Activated B cell treated with CpG ODN at 0.5 μM for 24 hours (primary cell): ENCODE measurements at regions of chr3 and their contacts with region 1.

Region 1: GRCh38 chr3:112642912-112643506 is 2.1 kb upstream of the CCDC80 start:
- DNase-seq: peak; percentile 51
- ATAC-seq: peak; percentile 100
- H3K4me3 Mint-ChIP-seq: peak overlapping the region; percentile 69
- H3K27ac Mint-ChIP-seq: no peak overlapping the region
- H3K4me1 Mint-ChIP-seq: peaks cover 11% of the 10 kb centered on the region
- H3K27me3 Mint-ChIP-seq: peaks cover 4% of the 10 kb centered on the region
- CTCF ChIP-seq: peak; percentile 36

Region 2: DNA sequence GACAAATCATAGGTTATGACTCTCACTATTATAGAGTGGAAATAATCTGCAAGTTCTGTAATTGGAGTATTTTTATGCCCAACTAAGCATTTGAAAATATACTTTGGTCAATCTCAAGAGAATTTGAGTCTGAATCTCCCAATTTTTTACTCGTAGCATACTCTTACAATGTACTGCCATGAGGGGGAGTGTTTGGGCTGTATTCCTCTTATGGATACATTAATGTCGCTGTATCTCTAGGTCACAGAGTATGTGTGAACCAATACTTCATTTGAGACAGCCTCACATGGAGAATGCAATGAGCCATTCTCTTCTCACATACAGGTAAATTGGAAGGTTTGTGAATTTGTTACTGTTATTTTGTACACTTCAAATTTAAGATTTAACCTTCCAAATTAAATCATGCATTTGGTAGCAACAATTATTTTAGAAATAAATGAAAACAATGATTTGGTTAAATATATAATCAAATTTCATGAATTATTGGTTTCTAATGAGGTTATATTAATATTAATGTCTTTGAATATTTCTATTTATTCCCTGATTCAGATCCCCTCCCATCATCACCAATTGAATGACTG is 315.5 kb before region 1 on chr3:
- CTCF ChIA-PET with region 1: no interaction called
- POLR2A ChIA-PET with region 1: no interaction called
- intact Hi-C with region 1: loop called (anchors 5 kb)
- DNase-seq: no peak
- ATAC-seq: peak; percentile 100
- H3K4me3 Mint-ChIP-seq: no peak overlapping the region
- H3K27ac Mint-ChIP-seq: no peak overlapping the region
- H3K4me1 Mint-ChIP-seq: peaks cover 17% of the 10 kb centered on the region
- H3K27me3 Mint-ChIP-seq: no peaks in the 10 kb centered on the region
- CTCF ChIP-seq: no peak

Region 3: GRCh38 chr3:112676659-112677234 is 33.7 kb after region 1 on chr3:
- CTCF ChIA-PET with region 1: interaction called, 3 read pairs
- POLR2A ChIA-PET with region 1: no interaction called
- intact Hi-C with region 1: loop called (anchors 1 kb)
- DNase-seq: peak; percentile 57
- ATAC-seq: peak; percentile 98
- H3K4me3 Mint-ChIP-seq: peak overlapping the region; percentile 67
- H3K27ac Mint-ChIP-seq: peak overlapping the region; percentile 84
- H3K4me1 Mint-ChIP-seq: peaks cover 25% of the 10 kb centered on the region
- H3K27me3 Mint-ChIP-seq: peaks cover 8% of the 10 kb centered on the region
- CTCF ChIP-seq: no peak

Region 4: GRCh38 chr3:112979240-112979832 is 336.3 kb after region 1 on chr3:
- CTCF ChIA-PET with region 1: interaction called, 71 read pairs
- POLR2A ChIA-PET with region 1: interaction called, 7 read pairs
- intact Hi-C with region 1: loop called (anchors 1 kb)
- DNase-seq: no peak
- ATAC-seq: no peak
- H3K4me3 Mint-ChIP-seq: no peak overlapping the region
- H3K27ac Mint-ChIP-seq: no peak overlapping the region
- H3K4me1 Mint-ChIP-seq: peaks cover 81% of the 10 kb centered on the region
- H3K27me3 Mint-ChIP-seq: no peaks in the 10 kb centered on the region
- CTCF ChIP-seq: peak; percentile 31

Region 5: GRCh38 chr3:113035387-113035982 is 392.5 kb after region 1 on chr3:
- CTCF ChIA-PET with region 1: interaction called, 16 read pairs
- POLR2A ChIA-PET with region 1: interaction called, 11 read pairs
- intact Hi-C with region 1: loop called (anchors 1 kb)
- DNase-seq: no peak
- ATAC-seq: peak; percentile 88
- H3K4me3 Mint-ChIP-seq: no peak overlapping the region
- H3K27ac Mint-ChIP-seq: no peak overlapping the region
- H3K4me1 Mint-ChIP-seq: no peaks in the 10 kb centered on the region
- H3K27me3 Mint-ChIP-seq: no peaks in the 10 kb centered on the region
- CTCF ChIP-seq: no peak

Region 6: GRCh38 chr3:113287803-113288648 is 645.0 kb after region 1 on chr3:
- CTCF ChIA-PET with region 1: interaction called, 71 read pairs
- POLR2A ChIA-PET with region 1: interaction called, 5 read pairs
- intact Hi-C with region 1: loop called (anchors 1 kb)
- DNase-seq: no peak
- ATAC-seq: peak; percentile 45
- H3K4me3 Mint-ChIP-seq: no peak overlapping the region
- H3K27ac Mint-ChIP-seq: no peak overlapping the region
- H3K4me1 Mint-ChIP-seq: no peaks in the 10 kb centered on the region
- H3K27me3 Mint-ChIP-seq: no peaks in the 10 kb centered on the region
- CTCF ChIP-seq: peak; percentile 59